Activated CD4-positive, alpha-beta memory T cell treated with anti-CD3 and anti-CD28 coated beads for 36 hours (primary cell): ENCODE measurements at regions of chr10 and their contacts with region 1.

Region 1: GRCh38 chr10:7417103-7417623 is 6.3 kb upstream of the SFMBT2 start:
- DNase-seq: no peak
- H3K4me3 Mint-ChIP-seq: no peak overlapping the region
- H3K27ac Mint-ChIP-seq: no peak overlapping the region
- H3K4me1 Mint-ChIP-seq: peaks cover 14% of the 10 kb centered on the region
- H3K27me3 Mint-ChIP-seq: peaks cover 8% of the 10 kb centered on the region

Region 2: DNA sequence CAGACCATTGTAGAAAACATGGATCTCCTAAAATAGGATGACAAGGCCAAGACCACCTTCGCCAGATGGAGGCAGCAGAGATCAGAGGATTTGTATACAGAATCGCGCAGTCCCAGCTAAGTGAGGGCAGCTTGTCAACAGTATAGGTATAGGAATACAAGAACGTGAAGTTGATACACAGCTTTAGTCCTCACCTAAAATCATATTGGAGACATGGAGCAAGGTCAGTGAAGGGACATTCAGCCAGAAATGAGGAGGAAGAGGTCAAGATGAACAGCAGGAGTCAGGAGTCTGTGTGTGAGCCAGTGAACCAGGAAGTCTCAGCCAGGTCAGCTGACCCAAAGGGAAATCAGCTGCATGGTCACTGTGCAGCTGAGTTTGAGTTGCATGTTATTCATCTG is 573.7 kb before region 1 on chr10:
- CTCF ChIA-PET with region 1: interaction called, 3 read pairs
- POLR2A ChIA-PET with region 1: no interaction called
- intact Hi-C with region 1: loop called (anchors 5 kb)
- DNase-seq: peak; percentile 27
- H3K4me3 Mint-ChIP-seq: no peak overlapping the region
- H3K27ac Mint-ChIP-seq: no peak overlapping the region
- H3K4me1 Mint-ChIP-seq: peaks cover 5% of the 10 kb centered on the region
- H3K27me3 Mint-ChIP-seq: peaks cover 17% of the 10 kb centered on the region

Region 3: GRCh38 chr10:7121154-7121810 is 295.9 kb before region 1 on chr10:
- CTCF ChIA-PET with region 1: interaction called, 35 read pairs
- POLR2A ChIA-PET with region 1: no interaction called
- intact Hi-C with region 1: loop called (anchors 1 kb)
- DNase-seq: peak; percentile 77
- H3K4me3 Mint-ChIP-seq: no peak overlapping the region
- H3K27ac Mint-ChIP-seq: no peak overlapping the region
- H3K4me1 Mint-ChIP-seq: peaks cover 3% of the 10 kb centered on the region
- H3K27me3 Mint-ChIP-seq: peaks cover 10% of the 10 kb centered on the region